ENCODE measurements at regions of chr4 and their contacts with region 1.

Region 1: DNA sequence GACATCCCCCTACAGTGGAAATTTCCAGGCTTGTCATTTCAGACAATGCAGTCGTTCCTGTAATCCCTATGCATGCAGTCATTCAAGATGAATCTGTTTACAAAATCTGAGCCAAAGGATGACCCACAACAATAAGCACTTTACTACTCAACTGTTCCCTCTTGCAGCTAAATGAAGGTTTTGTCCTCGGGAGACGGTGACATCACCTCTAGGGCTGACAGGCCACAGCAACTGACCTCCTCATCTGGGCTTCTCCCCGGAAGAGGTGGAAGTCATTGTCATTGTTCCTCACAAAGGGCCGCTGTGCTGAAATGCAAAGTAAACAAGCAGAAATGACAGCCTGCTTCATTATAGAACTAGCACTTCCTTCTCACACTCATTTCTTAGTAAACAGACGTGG is 29.2 kb downstream of the CLRN2 start:
- DNase-seq: no peak
- H3K4me3 ChIP-seq: no peak overlapping the region
- H3K27me3 ChIP-seq: no peaks in the 10 kb centered on the region; the same call in 1 of the 2 replicates
- CTCF ChIP-seq: no peak

Region 2: GRCh38 chr4:16864199-16864598 is 680.0 kb before region 1 on chr4:
- CTCF ChIA-PET with region 1: no interaction called
- POLR2A ChIA-PET with region 1: no interaction called
- DNase-seq: no peak
- H3K4me3 ChIP-seq: no peak overlapping the region
- H3K27me3 ChIP-seq: no peaks in the 10 kb centered on the region
- CTCF ChIP-seq: no peak

Region 3: GRCh38 chr4:17557880-17558279 is 13.7 kb after region 1 on chr4:
- CTCF ChIA-PET with region 1: interaction called, 15 read pairs
- POLR2A ChIA-PET with region 1: no interaction called
- DNase-seq: no peak
- H3K4me3 ChIP-seq: no peak overlapping the region
- H3K27me3 ChIP-seq: no peaks in the 10 kb centered on the region; the same call in 1 of the 2 replicates
- CTCF ChIP-seq: no peak

Region 4: GRCh38 chr4:17636696-17637622 is 92.8 kb after region 1 on chr4:
- CTCF ChIA-PET with region 1: interaction called, 57 read pairs
- POLR2A ChIA-PET with region 1: interaction called, 6 read pairs
- DNase-seq: no peak
- H3K4me3 ChIP-seq: no peak overlapping the region
- H3K27me3 ChIP-seq: no peaks in the 10 kb centered on the region
- CTCF ChIP-seq: peak; percentile 91

Region 5: DNA sequence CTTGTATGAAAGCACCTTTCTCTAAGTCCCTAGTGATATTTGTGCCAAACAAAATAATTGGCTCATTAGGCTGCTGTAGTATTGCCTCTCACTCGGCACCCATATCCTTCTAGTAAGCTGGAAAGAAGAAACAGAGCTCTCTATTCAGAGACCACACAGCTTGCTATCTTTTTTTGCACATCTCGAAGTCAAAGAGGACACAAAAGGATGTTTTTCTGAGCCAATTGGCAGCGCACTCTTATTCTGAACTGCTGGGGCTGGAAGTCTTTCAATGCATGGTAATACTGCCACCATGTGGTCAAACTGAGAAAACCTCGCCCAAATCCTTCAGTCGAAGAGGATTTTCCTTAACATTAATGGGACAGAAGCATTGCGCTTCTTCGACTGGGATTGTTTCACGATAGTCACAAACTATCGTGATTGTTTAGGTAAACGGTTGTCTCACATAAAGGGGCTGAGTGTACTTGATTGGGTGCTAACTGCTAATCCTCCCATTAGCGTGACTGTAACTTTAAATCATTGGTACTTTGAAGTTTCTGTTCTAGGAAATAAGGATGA is 1049.3 kb after region 1 on chr4:
- CTCF ChIA-PET with region 1: interaction called, 10 read pairs
- POLR2A ChIA-PET with region 1: no interaction called
- DNase-seq: peak; percentile 13
- H3K4me3 ChIP-seq: no peak overlapping the region
- H3K27me3 ChIP-seq: 0 out of 2 replicates have a peak, but pooled peaks cover 1% of the 10 kb centered on the region
- CTCF ChIP-seq: peak; percentile 79

Measured in BJ (cell line).